Right ventricle myocardium inferior (tissue), 1 donor: ENCODE measurements at regions of chr9 and their contacts with region 1.

Region 1: DNA sequence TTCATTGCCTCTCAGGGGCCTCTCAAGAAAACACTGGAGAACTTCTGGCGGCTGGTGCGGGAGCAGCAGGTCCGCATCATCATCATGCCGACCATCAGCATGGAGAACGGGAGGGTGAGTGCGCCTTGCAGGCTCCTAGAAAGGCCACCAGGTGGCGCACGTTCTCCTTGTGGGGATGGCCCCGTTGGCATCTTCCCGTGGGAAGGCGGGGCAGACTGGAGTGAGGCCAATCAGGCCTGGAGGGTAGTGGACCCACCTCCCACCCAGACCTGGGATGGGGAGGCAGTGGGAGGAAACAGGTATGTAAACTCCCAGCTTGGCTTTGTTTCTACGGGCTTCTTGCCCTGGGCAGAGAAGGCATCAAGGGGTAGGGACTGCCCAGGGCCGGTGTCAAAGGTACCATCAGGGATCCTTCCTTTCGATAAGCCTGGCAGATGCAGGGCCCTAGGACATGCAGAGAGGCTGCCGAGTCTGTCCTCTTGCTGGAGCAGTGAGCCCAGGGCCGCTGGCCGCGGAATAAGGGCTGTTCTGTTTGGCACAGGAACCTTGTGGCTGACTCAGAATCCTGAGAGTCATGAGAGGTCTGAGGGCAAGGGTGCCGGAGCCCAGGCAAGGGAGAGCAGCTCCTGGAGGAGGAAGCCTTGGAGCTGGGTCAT is 18.9 kb upstream of the SPTLC1 start:
- DNase-seq: peak; percentile 92
- ATAC-seq: peak; percentile 71

Region 2: GRCh38 chr9:92108122-92108521 is 26.0 kb before region 1 on chr9:
- intact Hi-C with region 1: no loop called
- DNase-seq: no peak
- ATAC-seq: no peak

Region 3: DNA sequence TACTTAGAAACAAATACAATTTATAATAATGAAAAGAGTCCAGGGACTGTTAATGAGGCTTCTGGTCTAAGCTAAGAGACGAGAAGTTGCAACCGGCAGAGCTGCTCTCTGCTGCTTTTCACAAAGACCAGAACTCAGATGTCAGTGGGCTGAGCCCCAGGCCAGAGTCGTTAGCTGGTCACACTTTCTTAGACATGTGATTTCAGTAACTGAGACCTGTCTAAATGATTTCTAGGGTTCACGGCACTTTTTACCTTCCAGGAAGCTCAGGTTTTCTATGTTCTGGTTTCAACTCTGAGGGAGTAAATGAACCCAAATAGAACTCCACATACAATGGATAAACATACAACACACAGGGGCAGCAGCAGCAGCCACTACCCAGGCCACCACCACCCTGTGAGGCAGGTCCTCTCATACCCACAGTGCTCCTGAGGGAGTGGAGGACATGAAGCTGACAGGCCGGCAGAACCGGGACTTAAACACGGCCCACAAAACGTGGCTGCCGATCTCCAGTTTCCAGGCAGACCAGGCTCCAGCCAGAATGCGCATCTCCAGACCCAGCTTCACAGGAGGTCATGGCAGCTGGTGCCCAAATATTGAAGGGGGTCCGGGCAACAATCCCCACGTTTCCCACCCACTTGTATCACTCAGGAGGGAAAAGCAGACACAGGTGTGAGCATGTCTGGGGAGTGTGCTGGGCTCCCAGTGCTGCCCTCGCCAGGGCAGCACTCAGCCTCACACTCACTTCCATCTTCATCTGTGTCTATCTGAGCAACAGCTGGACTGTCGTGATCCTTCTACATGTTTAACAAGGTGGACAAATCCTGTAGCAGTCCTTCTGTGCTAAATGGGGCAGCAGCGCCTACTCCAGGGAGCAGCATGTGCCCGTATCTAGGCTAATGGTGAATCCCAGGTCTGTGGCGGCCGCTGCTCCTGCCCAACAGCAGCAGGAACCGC is 120.6 kb after region 1 on chr9:
- intact Hi-C with region 1: loop called (anchors 10 kb)
- DNase-seq: peak; percentile 25
- ATAC-seq: no peak

Region 4: GRCh38 chr9:92293452-92294296 is 159.6 kb after region 1 on chr9 and contains the start of gene IARS1:
- intact Hi-C with region 1: loop called (anchors 10 kb)
- DNase-seq: peak; percentile 99
- ATAC-seq: peak; percentile 100
- total RNA-seq, gene IARS1: 54.7 TPM

Region 5: DNA sequence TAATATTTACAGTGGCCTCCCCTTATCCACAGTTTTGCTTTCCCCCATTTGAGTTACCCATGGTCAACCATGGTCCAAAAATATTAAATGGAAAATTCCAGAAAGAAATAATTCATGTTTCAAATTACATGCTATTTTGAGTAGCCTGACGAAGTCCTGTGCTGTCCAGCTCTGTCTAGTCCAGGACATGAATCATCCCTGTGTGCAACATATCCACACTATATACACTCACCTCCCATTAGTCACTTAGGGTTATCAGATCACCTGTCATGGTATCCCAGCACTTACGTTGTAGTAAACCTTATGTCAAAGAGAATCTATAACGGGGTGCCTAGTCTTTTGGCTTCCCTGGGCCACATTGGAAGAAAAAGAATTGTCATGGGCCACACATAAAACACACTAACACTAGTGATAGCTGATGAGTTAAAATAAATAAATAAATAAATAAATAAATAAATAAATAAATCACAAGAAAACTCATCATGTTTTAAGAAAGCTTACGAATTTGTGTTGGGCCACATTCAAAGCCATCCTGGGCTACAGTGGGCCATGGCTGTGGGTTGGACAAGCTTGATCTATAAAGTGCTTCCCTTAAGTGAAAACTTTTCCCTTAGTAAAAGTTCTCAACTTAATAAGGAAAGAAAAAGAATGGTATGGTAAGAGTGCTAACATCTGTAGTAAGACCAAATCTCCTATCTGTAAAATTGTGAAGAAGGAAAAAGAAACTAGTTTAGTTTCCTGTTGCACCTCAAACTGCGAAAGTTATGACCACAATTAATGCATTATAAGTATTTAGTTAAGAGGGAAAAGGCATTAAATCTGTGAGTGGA is 306.1 kb after region 1 on chr9:
- intact Hi-C with region 1: loop called (anchors 10 kb)
- DNase-seq: no peak
- ATAC-seq: no peak

Region 6: GRCh38 chr9:92790542-92791527 is 656.8 kb after region 1 on chr9:
- intact Hi-C with region 1: loop called (anchors 10 kb)
- DNase-seq: peak; percentile 72
- ATAC-seq: peak; percentile 94